ENCODE measurements at regions of chr12 and their contacts with region 1.

Region 1: GRCh38 chr12:105705765-105706164 is 375.3 kb downstream of the C12orf75 start:
- DNase-seq: peak; percentile 33
- ATAC-seq: peak; percentile 78
- H3K4me3 ChIP-seq: no peak overlapping the region
- H3K27ac ChIP-seq: no peak overlapping the region
- H3K4me1 ChIP-seq: peaks cover 0 to 7% of the 10 kb centered on the region in 2 experiments; a peak in 2 of 4 replicates
- H3K27me3 ChIP-seq: no peaks in the 10 kb centered on the region
- CTCF ChIP-seq: peak; percentile 66 to 90 (median 80)
- POLR2A ChIP-seq: no peak
- RAD21 ChIP-seq: peak; percentile 66

Region 2: DNA sequence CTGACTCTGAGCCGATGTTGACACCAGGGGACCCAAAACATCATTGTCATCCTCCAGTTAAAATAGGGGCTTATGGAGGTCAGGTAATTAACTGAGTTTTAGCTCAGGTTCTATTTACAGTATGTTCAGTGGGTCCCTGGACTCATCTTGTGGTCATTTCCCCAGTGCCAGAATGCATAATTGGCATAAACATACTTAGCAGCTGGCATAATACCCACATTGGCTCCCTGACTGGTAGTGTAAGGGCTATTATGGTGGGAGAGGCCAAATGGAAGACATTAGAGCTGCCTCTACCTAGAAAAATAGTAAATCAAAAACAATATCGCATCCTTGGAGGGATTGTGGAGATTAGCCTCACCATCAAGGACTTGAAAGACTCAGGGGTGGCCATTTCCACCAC is 24.4 kb before region 1 on chr12:
- CTCF ChIA-PET with region 1: no interaction called
- POLR2A ChIA-PET with region 1: no interaction called
- RAD21 ChIA-PET with region 1: no interaction called
- intact Hi-C with region 1: no loop called
- DNase-seq: no peak
- ATAC-seq: no peak
- H3K4me3 ChIP-seq: no peak overlapping the region
- H3K27ac ChIP-seq: no peak overlapping the region
- H3K4me1 ChIP-seq: no peaks in the 10 kb centered on the region
- H3K27me3 ChIP-seq: no peaks in the 10 kb centered on the region
- CTCF ChIP-seq: no peak
- POLR2A ChIP-seq: no peak
- RAD21 ChIP-seq: no peak

Region 3: DNA sequence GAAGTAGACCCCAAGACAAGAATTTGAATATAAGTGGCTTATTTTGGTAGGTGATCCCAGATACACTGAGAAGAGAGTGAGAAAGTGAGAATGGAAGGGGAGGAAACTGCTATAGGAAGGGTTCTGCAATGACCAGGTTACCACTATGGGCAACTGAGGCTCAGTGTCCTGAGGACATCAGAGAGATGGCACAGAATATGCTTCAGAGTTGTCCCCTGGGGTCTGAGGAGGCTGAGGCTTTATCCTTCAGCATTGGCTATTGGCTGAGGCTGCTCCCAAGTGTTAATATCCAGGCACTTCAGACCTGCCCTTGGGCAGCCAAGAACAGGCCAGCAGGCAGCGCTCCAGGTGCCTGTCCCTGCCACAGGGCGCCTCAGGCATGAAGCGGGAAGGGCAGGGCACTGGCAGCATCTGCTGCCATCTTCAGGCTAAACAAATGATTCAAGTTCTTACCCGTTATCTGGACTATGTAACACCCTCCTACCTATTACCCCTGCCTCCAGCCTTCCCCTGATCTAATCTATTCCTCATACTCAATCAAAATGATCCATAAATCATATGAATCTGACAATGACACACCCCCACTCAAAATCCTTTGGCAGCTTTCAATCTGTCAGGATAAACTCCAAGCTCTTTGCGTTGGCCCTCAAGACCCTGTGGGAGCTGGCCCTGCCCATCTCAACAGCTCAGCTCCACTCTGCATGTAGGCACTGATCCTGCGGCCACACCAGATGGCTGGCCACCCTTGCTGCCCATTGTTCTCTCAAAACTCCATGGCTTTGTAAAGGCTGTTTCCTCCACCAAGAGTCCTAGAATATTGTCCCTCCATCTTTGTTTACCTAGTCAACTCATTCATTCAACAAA is 499.7 kb after region 1 on chr12:
- CTCF ChIA-PET with region 1: no interaction called
- POLR2A ChIA-PET with region 1: no interaction called
- RAD21 ChIA-PET with region 1: no interaction called
- intact Hi-C with region 1: loop called (anchors 1 kb)
- DNase-seq: peak; percentile 64
- ATAC-seq: peak; percentile 100
- H3K4me3 ChIP-seq: no peak overlapping the region
- H3K27ac ChIP-seq: no peak overlapping the region
- H3K4me1 ChIP-seq: no peaks in the 10 kb centered on the region; a peak in 1 of 4 replicates
- H3K27me3 ChIP-seq: peaks cover 5% of the 10 kb centered on the region; the same call in 1 of the 2 replicates
- CTCF ChIP-seq: peak; percentile 61 to 93 (median 69)
- POLR2A ChIP-seq: no peak
- RAD21 ChIP-seq: peak; percentile 83

Region 4: DNA sequence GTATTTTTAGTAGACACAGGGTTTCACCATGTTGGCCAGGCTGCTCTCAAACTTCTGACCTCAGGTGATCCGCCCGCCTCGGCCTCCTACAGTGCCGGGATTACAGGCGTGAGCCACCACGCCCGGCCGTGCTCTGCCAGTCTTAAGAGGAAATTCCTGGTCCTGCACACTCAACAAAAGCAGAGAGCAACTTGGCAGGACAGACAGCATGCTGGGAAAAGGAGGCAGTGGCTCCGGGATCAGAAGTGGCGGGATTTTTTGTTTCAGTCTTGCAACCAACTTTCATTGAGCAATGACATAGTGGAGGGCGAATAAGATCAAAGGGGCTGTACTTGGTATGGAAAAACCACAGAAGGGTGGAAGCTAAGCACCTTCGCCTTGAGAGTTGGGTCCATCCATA is 540.0 kb after region 1 on chr12:
- CTCF ChIA-PET with region 1: no interaction called
- POLR2A ChIA-PET with region 1: no interaction called
- RAD21 ChIA-PET with region 1: no interaction called
- intact Hi-C with region 1: no loop called
- DNase-seq: peak; percentile 79
- ATAC-seq: peak; percentile 64
- H3K4me3 ChIP-seq: peak overlapping the region; percentile 72 to 93
- H3K27ac ChIP-seq: peak overlapping the region; percentile 74
- H3K4me1 ChIP-seq: peaks cover 12 to 30% of the 10 kb centered on the region in 2 experiments
- H3K27me3 ChIP-seq: no peaks in the 10 kb centered on the region
- CTCF ChIP-seq: no peak
- POLR2A ChIP-seq: no peak
- RAD21 ChIP-seq: no peak